ENCODE measurements at regions of chr3 and their contacts with region 1.

Region 1: GRCh38 chr3:185764163-185764979 is 60.5 kb downstream of the IGF2BP2 start:
- DNase-seq: no peak
- ATAC-seq: 0 out of 3 replicates have a peak, but pooled peaks have one; percentile 23
- H3K4me3 ChIP-seq: no peak overlapping the region
- H3K27ac ChIP-seq: no peak overlapping the region
- H3K4me1 ChIP-seq: peaks cover 69% of the 10 kb centered on the region
- H3K27me3 ChIP-seq: no peaks in the 10 kb centered on the region
- CTCF ChIP-seq: no peak
- EP300 ChIP-seq: no peak
- POLR2A ChIP-seq: no peak
- RAD21 ChIP-seq: no peak

Region 2: DNA sequence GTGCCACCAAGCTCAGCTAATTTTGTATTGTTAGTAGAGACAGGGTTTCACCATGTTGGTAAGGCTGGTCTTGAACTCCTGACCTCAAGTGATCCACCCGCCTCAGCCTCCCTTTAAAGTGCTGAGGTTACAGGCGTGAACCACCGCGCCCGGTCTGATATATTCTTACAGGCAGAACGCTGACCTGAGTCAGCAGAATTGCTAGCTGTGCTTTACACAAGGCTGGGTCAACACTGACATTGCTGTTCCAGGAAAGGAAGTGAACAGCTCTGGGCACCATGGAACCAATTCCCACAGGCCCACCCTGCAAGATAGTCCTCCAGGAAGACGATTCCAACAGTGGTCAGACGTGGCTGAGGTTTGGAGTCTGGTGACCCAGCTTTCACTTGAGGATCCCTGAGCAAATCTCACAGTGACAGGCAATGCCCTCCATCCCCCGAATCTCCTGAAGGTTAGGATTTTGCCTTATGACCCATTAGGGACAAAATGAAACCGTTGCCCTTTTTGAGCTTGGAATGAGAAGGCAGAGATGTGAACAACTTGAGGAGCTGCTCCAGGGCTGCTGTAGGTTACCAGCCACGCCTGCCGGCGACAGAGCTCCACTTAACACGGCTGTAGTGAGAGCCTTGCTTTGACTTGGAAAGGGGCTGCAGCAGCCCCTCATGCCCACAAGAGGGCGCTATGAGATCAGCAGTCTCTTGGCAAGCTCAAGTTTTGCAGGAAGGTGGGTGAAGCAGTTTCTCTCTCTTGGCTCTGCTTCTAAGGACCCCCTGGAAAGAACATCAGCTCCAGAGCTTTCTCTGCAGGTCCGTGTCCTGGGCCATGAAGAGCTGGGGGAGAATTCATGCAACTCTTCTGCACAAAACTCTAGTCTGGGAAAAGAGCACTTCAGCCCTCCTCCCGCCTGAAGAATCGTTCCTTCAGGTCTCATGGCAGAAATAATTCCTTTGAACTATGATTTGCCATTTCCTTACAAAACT is 104.1 kb before region 1 on chr3:
- CTCF ChIA-PET with region 1: interaction called, 8 read pairs
- POLR2A ChIA-PET with region 1: interaction called, 4 read pairs
- in situ Hi-C with region 1: no loop called
- intact Hi-C with region 1: loop called (anchors 5 kb)
- DNase-seq: peak; percentile 72
- ATAC-seq: peak; percentile 80
- H3K4me3 ChIP-seq: no peak overlapping the region
- H3K27ac ChIP-seq: no peak overlapping the region
- H3K4me1 ChIP-seq: no peaks in the 10 kb centered on the region
- H3K27me3 ChIP-seq: no peaks in the 10 kb centered on the region
- CTCF ChIP-seq: peak; percentile 92
- EP300 ChIP-seq: no peak
- POLR2A ChIP-seq: no peak
- RAD21 ChIP-seq: peak; percentile 80

Region 3: DNA sequence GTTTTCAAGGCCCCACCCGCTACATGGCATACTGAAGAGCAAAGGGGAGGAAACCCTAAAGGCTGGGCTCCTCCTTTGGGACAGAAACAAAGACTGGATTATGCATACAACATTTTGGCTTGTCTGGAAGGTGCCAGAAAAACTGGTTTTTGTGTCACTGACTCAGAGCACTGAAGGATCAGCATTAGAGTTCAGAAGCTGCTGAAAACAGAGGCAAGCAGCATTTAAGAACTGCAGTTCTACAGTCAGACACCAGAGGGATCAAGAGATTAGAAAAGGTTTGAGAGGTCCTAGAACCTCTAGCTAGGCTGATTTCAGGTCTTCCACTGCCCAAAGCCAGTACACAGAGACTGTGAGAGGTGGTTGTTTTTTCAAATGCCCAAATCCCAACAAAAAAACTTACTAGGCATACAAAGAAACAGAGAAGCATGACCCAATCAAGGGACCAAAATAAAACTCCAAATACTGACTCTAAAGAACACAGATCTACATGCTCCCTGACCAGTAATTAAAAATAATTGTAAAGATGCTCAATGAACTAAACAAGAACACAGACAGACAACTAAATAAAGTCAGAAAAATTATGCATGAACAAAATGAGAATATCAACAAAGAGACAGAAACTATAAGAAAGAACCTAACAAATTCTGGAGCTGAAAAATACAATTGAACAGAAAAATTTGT is 87.1 kb before region 1 on chr3:
- CTCF ChIA-PET with region 1: interaction called, 11 read pairs
- POLR2A ChIA-PET with region 1: no interaction called
- in situ Hi-C with region 1: loop called (anchors 5 kb)
- intact Hi-C with region 1: loop called (anchors 1 kb)
- DNase-seq: peak; percentile 56
- ATAC-seq: peak; percentile 91
- H3K4me3 ChIP-seq: no peak overlapping the region
- H3K27ac ChIP-seq: no peak overlapping the region
- H3K4me1 ChIP-seq: no peaks in the 10 kb centered on the region
- H3K27me3 ChIP-seq: no peaks in the 10 kb centered on the region
- CTCF ChIP-seq: peak; percentile 67
- EP300 ChIP-seq: no peak
- POLR2A ChIP-seq: no peak
- RAD21 ChIP-seq: peak; percentile 64

Region 4: DNA sequence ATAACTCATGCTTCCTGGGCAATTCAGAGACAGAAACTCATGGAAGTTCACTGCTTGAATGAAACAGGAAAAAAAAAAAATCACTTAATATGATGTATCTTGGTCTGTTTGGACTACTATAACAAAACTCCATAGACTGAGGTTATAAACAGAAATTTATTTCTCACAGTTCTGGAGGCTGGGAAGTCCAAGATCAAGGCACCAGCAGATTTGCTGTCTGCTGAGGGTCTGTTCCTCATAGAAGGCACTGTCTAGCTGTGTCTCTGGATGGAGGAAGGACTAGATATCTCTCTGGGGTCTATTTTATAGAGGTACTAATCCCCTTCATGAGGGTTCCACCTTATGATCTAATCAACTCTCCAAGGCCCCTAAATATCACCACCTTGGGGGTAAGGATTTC is 58.9 kb before region 1 on chr3:
- CTCF ChIA-PET with region 1: no interaction called
- POLR2A ChIA-PET with region 1: no interaction called
- in situ Hi-C with region 1: no loop called
- intact Hi-C with region 1: loop called (anchors 2 kb)
- DNase-seq: no peak
- ATAC-seq: no peak
- H3K4me3 ChIP-seq: no peak overlapping the region
- H3K27ac ChIP-seq: peak overlapping the region; percentile 67
- H3K4me1 ChIP-seq: peaks cover 70% of the 10 kb centered on the region
- H3K27me3 ChIP-seq: no peaks in the 10 kb centered on the region
- CTCF ChIP-seq: no peak
- EP300 ChIP-seq: no peak
- POLR2A ChIP-seq: no peak
- RAD21 ChIP-seq: no peak

Region 5: GRCh38 chr3:185733980-185734724 is 30.2 kb before region 1 on chr3:
- CTCF ChIA-PET with region 1: interaction called, 12 read pairs
- POLR2A ChIA-PET with region 1: no interaction called
- in situ Hi-C with region 1: no loop called
- intact Hi-C with region 1: loop called (anchors 1 kb)
- DNase-seq: peak; percentile 63
- ATAC-seq: peak; percentile 82
- H3K4me3 ChIP-seq: no peak overlapping the region
- H3K27ac ChIP-seq: no peak overlapping the region
- H3K4me1 ChIP-seq: peaks cover 51% of the 10 kb centered on the region
- H3K27me3 ChIP-seq: no peaks in the 10 kb centered on the region
- CTCF ChIP-seq: peak; percentile 70
- EP300 ChIP-seq: no peak
- POLR2A ChIP-seq: no peak
- RAD21 ChIP-seq: peak; percentile 32; the same call in 1 of the 2 replicates

Measured in HepG2 (cell line).